CD4-positive, alpha-beta T cell (primary cell): ENCODE measurements at regions of chr15 and their contacts with region 1.

Region 1: GRCh38 chr15:83066734-83067637 is at the start of gene BTBD1:
- DNase-seq: peak; percentile 53 to 90 (median 74)
- ATAC-seq: peak; percentile 73
- H3K4me3 ChIP-seq: peak within 1 kb of the TSS; percentile 82
- H3K4me3 Mint-ChIP-seq: peak within 1 kb of the TSS; percentile 88
- H3K27ac ChIP-seq: peak within 1 kb of the TSS; percentile 57 to 74
- H3K27ac Mint-ChIP-seq: peak within 1 kb of the TSS; percentile 81
- H3K4me1 ChIP-seq: peaks cover 22% of the 10 kb centered on the region
- H3K4me1 Mint-ChIP-seq: peaks cover 9% of the 10 kb centered on the region
- H3K27me3 ChIP-seq: no peaks in the 10 kb centered on the region
- H3K27me3 Mint-ChIP-seq: no peaks in the 10 kb centered on the region
- CTCF ChIP-seq: no peak
- total RNA-seq, gene BTBD1: 26.3 to 27.5 TPM

Region 2: DNA sequence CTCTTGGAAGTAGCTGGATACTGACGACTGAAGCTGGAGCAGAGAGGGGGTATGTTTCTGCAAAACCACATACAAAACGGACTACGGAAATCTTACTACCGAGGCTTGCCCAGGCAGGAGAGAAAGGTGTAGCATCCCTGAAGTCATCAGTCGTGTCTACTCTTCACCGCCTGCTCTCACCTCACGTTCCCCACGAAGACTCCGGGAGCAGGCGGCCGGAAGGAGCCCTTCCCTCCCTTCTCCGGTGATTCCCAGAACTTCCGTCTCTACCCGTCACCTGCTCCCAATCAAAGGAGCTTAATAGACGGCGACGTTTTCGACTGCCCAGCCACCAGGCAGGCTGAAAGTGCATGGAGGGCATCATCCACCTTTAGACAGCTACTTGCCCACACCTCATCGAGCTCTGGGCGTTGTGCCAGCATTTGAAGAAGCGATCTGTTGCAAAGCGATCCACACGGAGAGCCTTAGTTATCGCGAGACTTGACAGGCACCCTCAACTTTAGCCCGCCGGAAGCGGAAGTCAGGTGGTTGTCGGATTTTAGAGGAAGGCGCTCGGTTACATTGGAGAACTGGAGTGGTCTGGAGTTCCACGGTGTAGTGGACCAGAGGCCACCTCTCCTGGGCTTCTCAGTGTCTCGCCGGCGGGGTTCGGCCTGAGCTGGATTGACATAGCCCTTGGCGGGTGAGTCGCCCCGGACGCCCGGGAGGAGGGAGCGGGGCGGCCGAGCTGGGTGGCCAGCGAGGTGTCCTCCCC is 81.1 kb before region 1 on chr15 and contains the start of gene RAMAC:
- CTCF ChIA-PET with region 1: no interaction called
- POLR2A ChIA-PET with region 1: interaction called, 9 read pairs
- intact Hi-C with region 1: loop called in 1 of 2 experiments (anchors 5 kb)
- DNase-seq: peak; percentile 84 to 98 (median 92)
- ATAC-seq: peak; percentile 92
- H3K4me3 ChIP-seq: peak within 1 kb of the TSS; percentile 94
- H3K4me3 Mint-ChIP-seq: peak within 1 kb of the TSS; percentile 97
- H3K27ac ChIP-seq: peak within 1 kb of the TSS; percentile 54 to 65
- H3K27ac Mint-ChIP-seq: peak within 1 kb of the TSS; percentile 87
- H3K4me1 ChIP-seq: peaks cover 18% of the 10 kb centered on the region
- H3K4me1 Mint-ChIP-seq: peaks cover 27% of the 10 kb centered on the region
- H3K27me3 ChIP-seq: no peaks in the 10 kb centered on the region
- H3K27me3 Mint-ChIP-seq: no peaks in the 10 kb centered on the region
- CTCF ChIP-seq: no peak
- total RNA-seq, gene RAMAC: 25.5 to 26.5 TPM

Region 3: GRCh38 chr15:83127648-83128047 is 60.7 kb after region 1 on chr15:
- CTCF ChIA-PET with region 1: no interaction called
- POLR2A ChIA-PET with region 1: no interaction called
- intact Hi-C with region 1: no loop called
- DNase-seq: no peak
- ATAC-seq: no peak
- H3K4me3 ChIP-seq: no peak overlapping the region
- H3K4me3 Mint-ChIP-seq: no peak overlapping the region
- H3K27ac ChIP-seq: no peak overlapping the region
- H3K27ac Mint-ChIP-seq: no peak overlapping the region
- H3K4me1 ChIP-seq: no peaks in the 10 kb centered on the region
- H3K4me1 Mint-ChIP-seq: no peaks in the 10 kb centered on the region
- H3K27me3 ChIP-seq: no peaks in the 10 kb centered on the region
- H3K27me3 Mint-ChIP-seq: no peaks in the 10 kb centered on the region
- CTCF ChIP-seq: no peak

Region 4: DNA sequence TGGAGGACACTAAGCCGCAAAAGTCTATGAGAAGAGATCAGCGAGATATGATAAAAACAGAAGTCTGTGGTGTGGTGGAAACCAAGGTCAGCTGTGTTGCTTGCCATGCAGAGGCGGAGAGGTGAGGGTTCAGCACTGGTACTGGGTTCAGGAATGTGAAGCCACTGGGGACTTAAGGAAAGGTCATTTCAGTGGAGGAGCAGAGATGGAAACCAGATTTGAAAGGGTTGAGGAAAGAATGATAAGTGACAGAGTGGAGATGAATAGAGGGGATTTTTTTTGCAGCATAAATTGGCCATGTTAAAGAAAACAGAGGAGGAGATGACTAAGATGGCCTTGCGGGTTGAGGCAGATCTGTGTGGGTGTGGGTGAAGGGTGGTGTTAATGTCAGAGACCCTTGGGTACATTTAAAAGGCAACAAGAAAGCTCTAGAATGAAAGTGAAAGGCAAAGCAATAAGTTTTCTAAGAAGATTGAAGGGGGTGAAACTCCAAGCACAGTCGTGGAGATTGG is 852.4 kb after region 1 on chr15:
- CTCF ChIA-PET with region 1: no interaction called
- POLR2A ChIA-PET with region 1: no interaction called
- intact Hi-C with region 1: no loop called
- DNase-seq: peak in 1 of 14 experiments; percentile 26
- ATAC-seq: no peak
- H3K4me3 ChIP-seq: no peak overlapping the region
- H3K4me3 Mint-ChIP-seq: no peak overlapping the region
- H3K27ac ChIP-seq: no peak overlapping the region
- H3K27ac Mint-ChIP-seq: no peak overlapping the region
- H3K4me1 ChIP-seq: no peaks in the 10 kb centered on the region
- H3K4me1 Mint-ChIP-seq: no peaks in the 10 kb centered on the region
- H3K27me3 ChIP-seq: no peaks in the 10 kb centered on the region
- H3K27me3 Mint-ChIP-seq: peaks cover 5% of the 10 kb centered on the region
- CTCF ChIP-seq: no peak